ENCODE measurements at regions of chr1 and their contacts with region 1.

Region 1: DNA sequence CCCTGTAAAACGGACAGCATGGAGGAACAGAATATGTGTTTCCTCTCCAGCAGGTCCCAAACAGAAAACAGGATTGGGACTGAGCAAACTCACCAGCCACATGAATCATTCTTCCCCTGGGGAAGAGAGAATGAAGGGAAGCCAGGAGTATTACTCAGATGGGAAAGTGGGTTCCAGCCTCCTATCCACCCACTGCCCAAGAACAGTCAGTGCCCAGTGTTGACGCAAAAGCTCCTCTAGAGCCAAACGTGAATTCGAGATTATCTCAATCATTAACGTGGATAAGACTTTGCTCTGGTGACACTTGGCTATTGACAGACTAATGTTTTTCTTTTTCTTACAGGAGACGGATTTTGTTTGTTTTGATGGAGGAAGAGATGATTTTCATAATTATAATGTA is 9.3 kb downstream of the MIA3 start:
- DNase-seq: no peak

Region 2: GRCh38 chr1:222582099-222582774 is 45.0 kb before region 1 on chr1:
- intact Hi-C with region 1: loop called (anchors 2 to 10 kb)
- DNase-seq: no peak

Measured in posterior vena cava (tissue), 2 donors.